Caco-2 (cell line): ENCODE measurements at regions of chr4 and their contacts with region 1.

Region 1: DNA sequence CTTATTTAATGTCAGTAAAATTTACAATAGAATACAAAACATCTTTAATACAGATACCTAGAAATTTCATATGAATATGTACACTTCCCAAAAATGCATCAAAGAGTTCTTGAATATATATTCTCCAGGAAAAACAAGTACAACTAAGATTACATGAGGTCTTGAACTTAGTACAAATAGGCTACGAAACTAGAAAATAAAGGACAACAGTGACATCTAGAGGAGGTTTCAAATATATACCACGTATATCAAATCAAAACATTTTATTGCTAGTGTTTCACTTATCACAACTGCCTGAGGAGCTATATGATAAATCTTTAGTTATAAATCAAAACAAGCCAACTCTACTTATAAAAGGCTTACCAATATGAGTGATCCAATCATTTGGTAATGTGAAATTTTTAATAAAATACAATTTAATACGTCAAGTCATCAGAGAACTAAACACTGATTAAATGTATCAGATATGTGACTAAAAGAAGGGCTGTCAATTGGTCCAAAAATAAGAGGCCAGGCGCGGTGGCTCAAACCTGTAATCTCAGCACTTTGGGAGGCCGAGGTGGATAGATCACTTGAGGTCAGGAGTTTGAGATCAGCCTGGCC is 36.6 kb downstream of the ANAPC10 start:
- DNase-seq: peak in 1 of 2 experiments; percentile 15
- H3K4me3 ChIP-seq: no peak overlapping the region
- H3K4me3 Mint-ChIP-seq: no peak overlapping the region
- H3K27ac Mint-ChIP-seq: no peak overlapping the region
- H3K4me1 ChIP-seq: peaks cover 6% of the 10 kb centered on the region
- H3K4me1 Mint-ChIP-seq: peaks cover 5% of the 10 kb centered on the region
- H3K27me3 ChIP-seq: no peaks in the 10 kb centered on the region
- H3K27me3 Mint-ChIP-seq: no peaks in the 10 kb centered on the region
- CTCF ChIP-seq: peak; percentile 5 to 22

Region 2: GRCh38 chr4:144518181-144518902 is 543.1 kb before region 1 on chr4:
- CTCF ChIA-PET with region 1: no interaction called
- POLR2A ChIA-PET with region 1: no interaction called
- intact Hi-C with region 1: no loop called
- DNase-seq: peak in 1 of 2 experiments; percentile 37
- H3K4me3 ChIP-seq: no peak overlapping the region
- H3K4me3 Mint-ChIP-seq: no peak overlapping the region
- H3K27ac Mint-ChIP-seq: no peak overlapping the region
- H3K4me1 ChIP-seq: peaks cover 7% of the 10 kb centered on the region; the same call in 1 of the 2 replicates
- H3K4me1 Mint-ChIP-seq: no peaks in the 10 kb centered on the region
- H3K27me3 ChIP-seq: no peaks in the 10 kb centered on the region
- H3K27me3 Mint-ChIP-seq: no peaks in the 10 kb centered on the region
- CTCF ChIP-seq: no peak

Region 3: GRCh38 chr4:144787365-144788258 is 273.8 kb before region 1 on chr4:
- CTCF ChIA-PET with region 1: no interaction called
- POLR2A ChIA-PET with region 1: no interaction called
- intact Hi-C with region 1: loop called (anchors 1 kb)
- DNase-seq: peak in 1 of 2 experiments; percentile 15
- H3K4me3 ChIP-seq: no peak overlapping the region
- H3K4me3 Mint-ChIP-seq: no peak overlapping the region
- H3K27ac Mint-ChIP-seq: no peak overlapping the region
- H3K4me1 ChIP-seq: peaks cover 10% of the 10 kb centered on the region
- H3K4me1 Mint-ChIP-seq: no peaks in the 10 kb centered on the region
- H3K27me3 ChIP-seq: no peaks in the 10 kb centered on the region
- H3K27me3 Mint-ChIP-seq: no peaks in the 10 kb centered on the region
- CTCF ChIP-seq: peak; percentile 40 to 53